ENCODE measurements at regions of chr3 and their contacts with region 1.

Region 1: GRCh38 chr3:159804726-159805410 is 183.8 kb upstream of the IL12A start:
- DNase-seq: no peak
- ATAC-seq: peak; percentile 99
- H3K4me3 ChIP-seq: no peak overlapping the region
- H3K27ac ChIP-seq: no peak overlapping the region
- H3K4me1 ChIP-seq: no peaks in the 10 kb centered on the region
- H3K27me3 ChIP-seq: peaks cover 0 to 1% of the 10 kb centered on the region in 2 experiments; a peak in 2 of 4 replicates
- CTCF ChIP-seq: peak; percentile 87 to 92 (median 90)
- EP300 ChIP-seq: no peak
- POLR2A ChIP-seq: no peak
- RAD21 ChIP-seq: peak; percentile 96

Region 2: GRCh38 chr3:158845765-158846350 is 959.0 kb before region 1 on chr3:
- CTCF ChIA-PET with region 1: interaction called, 5 read pairs
- POLR2A ChIA-PET with region 1: no interaction called
- RAD21 ChIA-PET with region 1: interaction called, 8 read pairs
- SMC1A ChIA-PET with region 1: interaction called, 3 read pairs
- in situ Hi-C with region 1: no loop called
- intact Hi-C with region 1: loop called (anchors 1 kb)
- DNase-seq: no peak
- ATAC-seq: peak; percentile 64
- H3K4me3 ChIP-seq: no peak overlapping the region
- H3K27ac ChIP-seq: no peak overlapping the region
- H3K4me1 ChIP-seq: peaks cover 9% of the 10 kb centered on the region
- H3K27me3 ChIP-seq: no peaks in the 10 kb centered on the region
- CTCF ChIP-seq: peak; percentile 59 to 81 (median 68)
- EP300 ChIP-seq: no peak
- POLR2A ChIP-seq: no peak
- RAD21 ChIP-seq: peak; percentile 83

Region 3: GRCh38 chr3:159102001-159102400 is 702.9 kb before region 1 on chr3:
- CTCF ChIA-PET with region 1: no interaction called
- POLR2A ChIA-PET with region 1: no interaction called
- RAD21 ChIA-PET with region 1: no interaction called
- SMC1A ChIA-PET with region 1: no interaction called
- in situ Hi-C with region 1: no loop called
- intact Hi-C with region 1: no loop called
- DNase-seq: no peak
- ATAC-seq: no peak
- H3K4me3 ChIP-seq: no peak overlapping the region
- H3K27ac ChIP-seq: no peak overlapping the region
- H3K4me1 ChIP-seq: no peaks in the 10 kb centered on the region
- H3K27me3 ChIP-seq: no peaks in the 10 kb centered on the region
- CTCF ChIP-seq: no peak
- EP300 ChIP-seq: no peak
- POLR2A ChIP-seq: no peak
- RAD21 ChIP-seq: no peak

Region 4: DNA sequence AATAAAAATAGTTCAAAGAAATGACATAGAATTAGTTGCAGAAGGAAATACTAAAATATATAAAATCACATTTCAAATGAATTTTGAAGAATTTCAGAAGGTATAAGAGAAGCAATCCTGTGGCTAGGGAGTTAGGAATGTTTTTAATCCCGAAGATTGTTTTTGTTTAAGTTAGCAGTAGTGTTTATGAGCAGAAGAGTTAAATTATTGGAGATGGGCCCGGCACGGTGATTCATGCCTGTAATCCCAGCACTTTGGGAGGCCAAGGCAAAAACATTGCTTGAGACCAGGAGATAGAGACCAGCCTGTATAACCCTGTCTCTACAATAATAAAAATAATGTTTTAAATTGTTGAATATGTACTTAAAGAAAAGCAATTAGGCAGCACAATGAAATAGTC is 570.6 kb before region 1 on chr3:
- CTCF ChIA-PET with region 1: no interaction called
- POLR2A ChIA-PET with region 1: no interaction called
- RAD21 ChIA-PET with region 1: no interaction called
- SMC1A ChIA-PET with region 1: no interaction called
- in situ Hi-C with region 1: no loop called
- intact Hi-C with region 1: no loop called
- DNase-seq: no peak
- ATAC-seq: no peak
- H3K4me3 ChIP-seq: no peak overlapping the region
- H3K27ac ChIP-seq: no peak overlapping the region
- H3K4me1 ChIP-seq: no peaks in the 10 kb centered on the region
- H3K27me3 ChIP-seq: no peaks in the 10 kb centered on the region
- CTCF ChIP-seq: no peak
- EP300 ChIP-seq: no peak
- POLR2A ChIP-seq: no peak
- RAD21 ChIP-seq: no peak

Region 5: GRCh38 chr3:159273608-159274007 is 531.3 kb before region 1 on chr3:
- CTCF ChIA-PET with region 1: interaction called, 49 read pairs
- POLR2A ChIA-PET with region 1: no interaction called
- RAD21 ChIA-PET with region 1: no interaction called
- SMC1A ChIA-PET with region 1: no interaction called
- in situ Hi-C with region 1: loop called (anchors 5 kb)
- intact Hi-C with region 1: no loop called
- DNase-seq: no peak
- ATAC-seq: 0 out of 3 replicates have a peak, but pooled peaks have one; percentile 31
- H3K4me3 ChIP-seq: no peak overlapping the region
- H3K27ac ChIP-seq: no peak overlapping the region
- H3K4me1 ChIP-seq: no peaks in the 10 kb centered on the region
- H3K27me3 ChIP-seq: no peaks in the 10 kb centered on the region
- CTCF ChIP-seq: no peak
- EP300 ChIP-seq: no peak
- POLR2A ChIP-seq: no peak
- RAD21 ChIP-seq: no peak

Region 6: GRCh38 chr3:159322322-159322939 is 482.4 kb before region 1 on chr3:
- CTCF ChIA-PET with region 1: interaction called, 52 read pairs
- POLR2A ChIA-PET with region 1: no interaction called
- RAD21 ChIA-PET with region 1: interaction called, 5 read pairs
- SMC1A ChIA-PET with region 1: interaction called, 41 read pairs
- in situ Hi-C with region 1: loop called (anchors 5 kb)
- intact Hi-C with region 1: loop called (anchors 1 kb)
- DNase-seq: no peak
- ATAC-seq: peak; percentile 89
- H3K4me3 ChIP-seq: no peak overlapping the region
- H3K27ac ChIP-seq: no peak overlapping the region
- H3K4me1 ChIP-seq: no peaks in the 10 kb centered on the region
- H3K27me3 ChIP-seq: no peaks in the 10 kb centered on the region
- CTCF ChIP-seq: peak; percentile 68 to 90 (median 88)
- EP300 ChIP-seq: no peak
- POLR2A ChIP-seq: no peak
- RAD21 ChIP-seq: peak; percentile 65

Region 7: GRCh38 chr3:159548675-159549335 is 256.1 kb before region 1 on chr3:
- CTCF ChIA-PET with region 1: no interaction called
- POLR2A ChIA-PET with region 1: no interaction called
- RAD21 ChIA-PET with region 1: no interaction called
- SMC1A ChIA-PET with region 1: no interaction called
- in situ Hi-C with region 1: no loop called
- intact Hi-C with region 1: no loop called
- DNase-seq: no peak
- ATAC-seq: no peak
- H3K4me3 ChIP-seq: no peak overlapping the region
- H3K27ac ChIP-seq: no peak overlapping the region
- H3K4me1 ChIP-seq: no peaks in the 10 kb centered on the region
- H3K27me3 ChIP-seq: no peaks in the 10 kb centered on the region
- CTCF ChIP-seq: no peak
- EP300 ChIP-seq: no peak
- POLR2A ChIP-seq: no peak
- RAD21 ChIP-seq: no peak

Region 8: GRCh38 chr3:159616212-159616825 is 188.5 kb before region 1 on chr3:
- CTCF ChIA-PET with region 1: no interaction called
- POLR2A ChIA-PET with region 1: no interaction called
- RAD21 ChIA-PET with region 1: no interaction called
- SMC1A ChIA-PET with region 1: no interaction called
- in situ Hi-C with region 1: no loop called
- intact Hi-C with region 1: loop called (anchors 5 kb)
- DNase-seq: no peak
- ATAC-seq: no peak
- H3K4me3 ChIP-seq: no peak overlapping the region
- H3K27ac ChIP-seq: no peak overlapping the region
- H3K4me1 ChIP-seq: no peaks in the 10 kb centered on the region
- H3K27me3 ChIP-seq: no peaks in the 10 kb centered on the region
- CTCF ChIP-seq: 0 out of 6 replicates have a peak, but pooled peaks of 1 of the 3 experiments have one; percentile 2
- EP300 ChIP-seq: no peak
- POLR2A ChIP-seq: no peak
- RAD21 ChIP-seq: no peak

Region 9: GRCh38 chr3:159783777-159784743 is 20.8 kb before region 1 on chr3:
- CTCF ChIA-PET with region 1: interaction called, 12 read pairs
- POLR2A ChIA-PET with region 1: interaction called, 3 read pairs
- RAD21 ChIA-PET with region 1: interaction called, 4 read pairs
- SMC1A ChIA-PET with region 1: interaction called, 4 read pairs
- in situ Hi-C with region 1: no loop called
- intact Hi-C with region 1: no loop called
- DNase-seq: peak; percentile 4
- ATAC-seq: peak; percentile 72
- H3K4me3 ChIP-seq: no peak overlapping the region
- H3K27ac ChIP-seq: no peak overlapping the region
- H3K4me1 ChIP-seq: no peaks in the 10 kb centered on the region; the same call in 1 of the 2 replicates
- H3K27me3 ChIP-seq: no peaks in the 10 kb centered on the region; a peak in 1 of 4 replicates
- CTCF ChIP-seq: no peak
- EP300 ChIP-seq: no peak
- POLR2A ChIP-seq: no peak
- RAD21 ChIP-seq: no peak

Region 10: DNA sequence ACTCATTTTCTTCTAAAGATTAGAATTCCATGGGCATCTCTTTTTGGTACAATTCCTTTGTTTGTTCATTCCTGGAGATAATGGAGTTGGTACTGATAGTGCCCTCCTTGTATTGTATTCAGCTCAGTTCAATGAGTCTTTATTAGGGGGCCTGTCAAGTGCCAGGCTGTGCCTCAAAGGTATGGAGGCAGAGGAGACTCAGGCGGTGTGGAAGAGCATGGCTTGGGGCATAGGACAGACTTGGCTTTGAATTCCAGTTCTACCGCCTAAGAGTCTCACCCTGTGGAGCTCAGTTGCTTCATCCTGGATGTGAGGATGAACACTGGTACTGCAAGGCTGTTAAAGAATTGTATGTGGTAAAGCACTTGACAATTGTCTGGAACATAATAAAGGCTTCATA is 12.8 kb before region 1 on chr3:
- CTCF ChIA-PET with region 1: interaction called, 17 read pairs
- POLR2A ChIA-PET with region 1: no interaction called
- RAD21 ChIA-PET with region 1: interaction called, 4 read pairs
- SMC1A ChIA-PET with region 1: interaction called, 4 read pairs
- in situ Hi-C with region 1: no loop called
- intact Hi-C with region 1: no loop called
- DNase-seq: no peak
- ATAC-seq: no peak
- H3K4me3 ChIP-seq: no peak overlapping the region
- H3K27ac ChIP-seq: no peak overlapping the region
- H3K4me1 ChIP-seq: no peaks in the 10 kb centered on the region
- H3K27me3 ChIP-seq: peaks cover 0 to 1% of the 10 kb centered on the region in 2 experiments; a peak in 3 of 4 replicates
- CTCF ChIP-seq: no peak
- EP300 ChIP-seq: no peak
- POLR2A ChIP-seq: no peak
- RAD21 ChIP-seq: no peak

Region 11: GRCh38 chr3:159861369-159861987 is 56.6 kb after region 1 on chr3:
- CTCF ChIA-PET with region 1: no interaction called
- POLR2A ChIA-PET with region 1: no interaction called
- RAD21 ChIA-PET with region 1: no interaction called
- SMC1A ChIA-PET with region 1: no interaction called
- in situ Hi-C with region 1: no loop called
- intact Hi-C with region 1: no loop called
- DNase-seq: peak; percentile 68
- ATAC-seq: peak; percentile 87
- H3K4me3 ChIP-seq: 0 out of 2 replicates have a peak overlapping the region, but pooled peaks have one; percentile 3
- H3K27ac ChIP-seq: peak overlapping the region; percentile 30; the same call in 1 of the 2 replicates
- H3K4me1 ChIP-seq: peaks cover 29% of the 10 kb centered on the region
- H3K27me3 ChIP-seq: no peaks in the 10 kb centered on the region
- CTCF ChIP-seq: no peak
- EP300 ChIP-seq: peak; percentile 40 to 54; a peak in 3 of 4 replicates
- POLR2A ChIP-seq: no peak
- RAD21 ChIP-seq: no peak